ENCODE measurements at regions of chr1 and their contacts with region 1.

Region 1: DNA sequence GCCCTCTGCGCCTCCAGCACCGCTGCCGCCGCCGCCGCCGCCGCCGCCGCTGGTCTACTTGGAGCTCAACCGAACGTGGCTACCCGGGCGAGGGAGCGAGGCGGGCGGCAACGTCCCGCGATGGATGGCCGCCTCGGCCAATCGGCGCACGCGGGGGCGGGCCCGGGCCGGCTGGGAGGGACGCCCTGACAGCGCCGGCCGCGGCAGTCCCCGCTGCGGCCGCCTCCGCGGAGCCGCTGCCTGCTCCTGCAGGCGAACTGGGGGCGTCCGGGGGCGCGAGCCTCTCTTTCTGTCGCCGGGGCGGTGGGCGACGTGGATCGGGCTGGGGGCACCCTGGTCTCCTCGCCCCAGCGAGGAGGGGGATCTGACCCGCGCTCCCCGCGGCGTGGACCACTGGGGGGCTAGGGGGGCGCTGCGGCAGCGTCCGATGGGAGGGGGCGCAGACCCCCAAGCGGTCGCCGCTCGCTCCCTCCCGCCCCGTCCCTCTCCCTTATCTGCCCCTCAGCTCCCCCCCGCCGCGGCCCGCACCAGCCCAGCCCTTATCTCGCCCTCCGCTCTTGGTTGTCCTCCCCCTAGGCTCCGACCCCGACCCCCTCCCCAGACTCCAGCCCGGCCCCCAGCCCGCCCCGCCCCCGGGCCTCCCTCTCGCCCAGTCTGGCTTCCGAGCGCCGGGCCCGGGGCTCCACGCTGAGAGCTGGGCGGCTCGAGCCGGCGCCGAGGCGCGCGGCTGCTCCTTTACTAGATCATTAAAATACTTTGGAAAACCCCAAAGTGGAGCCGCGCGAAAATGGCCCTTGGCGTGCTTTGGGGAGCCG is at the start of gene SSBP3:
- DNase-seq: peak; percentile 89 to 96 (median 93)
- ATAC-seq: peak; percentile 95
- H3K4me3 ChIP-seq: peak within 1 kb of the TSS; percentile 76
- H3K4me3 Mint-ChIP-seq: peak within 1 kb of the TSS; percentile 92 to 99 (median 96)
- H3K27ac ChIP-seq: peak within 1 kb of the TSS; percentile 93
- H3K27ac Mint-ChIP-seq: peak within 1 kb of the TSS; percentile 84 to 97 (median 91)
- H3K4me1 ChIP-seq: peaks cover 40 to 44% of the 10 kb centered on the region in 2 donors
- H3K4me1 Mint-ChIP-seq: peaks cover 59 to 74% (median 69%) of the 10 kb centered on the region in 7 donors
- H3K27me3 ChIP-seq: no peaks in the 10 kb centered on the region
- H3K27me3 Mint-ChIP-seq: no peaks in the 10 kb centered on the region
- total RNA-seq, gene SSBP3: 69.4 to 124 (median 98.1) TPM

Region 2: GRCh38 chr1:53889304-53890298 is 516.9 kb before region 1 on chr1 and contains the start of gene YIPF1:
- CTCF ChIA-PET with region 1: no interaction called
- POLR2A ChIA-PET with region 1: no interaction called
- intact Hi-C with region 1: loop called in 1 of 2 experiments (anchors 2 kb)
- DNase-seq: peak; percentile 61 to 88 (median 85)
- ATAC-seq: peak; percentile 98
- H3K4me3 ChIP-seq: peak within 1 kb of the TSS; percentile 79
- H3K4me3 Mint-ChIP-seq: peak within 1 kb of the TSS; percentile 88 to 98 (median 96)
- H3K27ac ChIP-seq: peak within 1 kb of the TSS; percentile 75
- H3K27ac Mint-ChIP-seq: peak within 1 kb of the TSS; percentile 89 to 97 (median 95)
- H3K4me1 ChIP-seq: peaks cover 20 to 23% of the 10 kb centered on the region in 2 donors
- H3K4me1 Mint-ChIP-seq: peaks cover 26 to 55% (median 51%) of the 10 kb centered on the region in 7 donors
- H3K27me3 ChIP-seq: no peaks in the 10 kb centered on the region
- H3K27me3 Mint-ChIP-seq: peaks cover 0 to 2% (median 0%) of the 10 kb centered on the region in 5 donors
- total RNA-seq, gene YIPF1: 10.5 to 18.0 (median 16.3) TPM

Region 3: DNA sequence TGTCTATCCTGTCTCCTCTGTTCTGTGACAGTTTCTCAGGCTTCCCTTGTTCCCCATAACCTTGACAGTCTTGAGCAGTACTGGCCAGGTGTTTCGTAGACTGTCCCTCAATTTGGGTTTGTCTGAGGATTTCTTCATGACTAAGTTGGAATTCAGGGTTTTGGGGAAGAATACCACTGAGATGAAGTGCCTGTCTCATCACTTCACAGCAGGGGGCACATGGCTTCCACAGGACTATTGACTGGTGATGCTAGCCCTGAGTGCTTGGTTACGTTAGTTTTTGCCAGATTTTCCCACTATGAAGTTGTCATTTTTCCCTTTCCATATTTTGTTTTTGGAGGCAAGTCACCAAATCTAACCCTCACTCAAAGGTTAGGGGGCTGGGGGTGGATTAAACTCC is 299.4 kb before region 1 on chr1:
- CTCF ChIA-PET with region 1: no interaction called
- POLR2A ChIA-PET with region 1: no interaction called
- intact Hi-C with region 1: loop called in 1 of 2 experiments (anchors 2 kb)
- DNase-seq: no peak
- ATAC-seq: no peak
- H3K4me3 ChIP-seq: no peak overlapping the region
- H3K4me3 Mint-ChIP-seq: no peak overlapping the region
- H3K27ac ChIP-seq: no peak overlapping the region
- H3K27ac Mint-ChIP-seq: no peak overlapping the region
- H3K4me1 ChIP-seq: no peaks in the 10 kb centered on the region
- H3K4me1 Mint-ChIP-seq: no peaks in the 10 kb centered on the region
- H3K27me3 ChIP-seq: no peaks in the 10 kb centered on the region
- H3K27me3 Mint-ChIP-seq: no peaks in the 10 kb centered on the region

Region 4: DNA sequence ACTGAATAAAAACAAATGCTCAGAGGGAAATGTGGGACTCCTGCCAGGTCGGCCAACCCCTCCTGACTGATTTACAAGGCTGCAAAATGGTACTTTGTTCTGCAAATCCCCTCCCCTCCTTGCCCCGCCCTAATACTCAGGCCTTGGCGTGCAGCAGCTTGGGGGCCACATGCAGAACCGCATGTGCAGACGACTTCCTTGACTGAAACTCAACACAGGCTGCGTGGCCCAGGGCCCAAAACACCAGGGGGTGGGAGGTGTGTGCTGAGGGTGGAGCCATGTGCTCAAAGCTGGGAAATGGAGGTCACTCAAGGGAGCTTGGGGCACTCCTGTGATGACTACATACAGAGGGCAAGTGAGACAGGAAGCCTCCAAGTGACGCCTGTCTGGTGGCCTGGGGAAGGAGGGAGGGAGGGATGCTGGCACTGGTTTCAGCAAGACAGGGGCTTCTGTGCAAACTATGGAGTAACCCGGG is 119.3 kb before region 1 on chr1:
- CTCF ChIA-PET with region 1: no interaction called
- POLR2A ChIA-PET with region 1: interaction called, 5 read pairs
- intact Hi-C with region 1: loop called (anchors 1 kb)
- DNase-seq: peak; percentile 21 to 82 (median 73)
- ATAC-seq: peak; percentile 76
- H3K4me3 ChIP-seq: peak overlapping the region; percentile 21
- H3K4me3 Mint-ChIP-seq: peak overlapping the region; percentile 79 to 90 (median 87)
- H3K27ac ChIP-seq: peak overlapping the region; percentile 85
- H3K27ac Mint-ChIP-seq: peak overlapping the region; percentile 87 to 99 (median 96)
- H3K4me1 ChIP-seq: peaks cover 6 to 90% of the 10 kb centered on the region in 2 donors
- H3K4me1 Mint-ChIP-seq: peaks cover 59 to 100% (median 94%) of the 10 kb centered on the region in 7 donors
- H3K27me3 ChIP-seq: no peaks in the 10 kb centered on the region
- H3K27me3 Mint-ChIP-seq: no peaks in the 10 kb centered on the region

Region 5: DNA sequence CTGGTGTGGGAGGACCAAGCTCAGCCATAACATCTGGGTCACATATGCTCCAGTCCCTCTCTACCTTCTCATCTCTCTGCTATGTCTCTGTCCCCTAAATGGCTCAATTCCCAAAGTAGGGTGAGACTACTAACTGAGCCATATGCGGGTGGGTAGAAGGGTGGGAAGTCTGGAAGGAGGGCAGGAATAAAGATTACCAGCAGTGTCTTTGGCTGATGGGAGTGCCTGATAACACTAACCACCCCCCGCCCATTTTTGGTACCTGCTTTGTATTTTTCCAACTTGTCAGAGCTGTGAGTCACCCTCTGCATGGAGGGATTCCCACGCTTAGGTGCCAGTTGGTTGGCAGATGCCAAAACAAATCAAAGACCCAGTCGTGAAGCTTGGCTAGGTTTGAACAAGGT is 14.6 kb after region 1 on chr1:
- CTCF ChIA-PET with region 1: no interaction called
- POLR2A ChIA-PET with region 1: no interaction called
- intact Hi-C with region 1: no loop called
- DNase-seq: no peak
- ATAC-seq: no peak
- H3K4me3 ChIP-seq: no peak overlapping the region
- H3K4me3 Mint-ChIP-seq: no peak overlapping the region
- H3K27ac ChIP-seq: no peak overlapping the region
- H3K27ac Mint-ChIP-seq: no peak overlapping the region
- H3K4me1 ChIP-seq: no peaks in the 10 kb centered on the region
- H3K4me1 Mint-ChIP-seq: peaks cover 0 to 8% (median 6%) of the 10 kb centered on the region in 7 donors
- H3K27me3 ChIP-seq: no peaks in the 10 kb centered on the region
- H3K27me3 Mint-ChIP-seq: peaks cover 0 to 16% (median 0%) of the 10 kb centered on the region in 5 donors

Region 6: GRCh38 chr1:54488779-54489626 is 82.5 kb after region 1 on chr1:
- CTCF ChIA-PET with region 1: interaction called, 15 read pairs
- POLR2A ChIA-PET with region 1: interaction called, 70 read pairs
- intact Hi-C with region 1: loop called (anchors 1 kb)
- DNase-seq: peak; percentile 54 to 88 (median 73)
- ATAC-seq: peak; percentile 82
- H3K4me3 ChIP-seq: peak overlapping the region; percentile 83
- H3K4me3 Mint-ChIP-seq: peak overlapping the region; percentile 85 to 95 (median 90)
- H3K27ac ChIP-seq: peak overlapping the region; percentile 75
- H3K27ac Mint-ChIP-seq: peak overlapping the region; percentile 51 to 93 (median 78)
- H3K4me1 ChIP-seq: peaks cover 25 to 33% of the 10 kb centered on the region in 2 donors
- H3K4me1 Mint-ChIP-seq: peaks cover 26 to 55% (median 41%) of the 10 kb centered on the region in 7 donors
- H3K27me3 ChIP-seq: no peaks in the 10 kb centered on the region
- H3K27me3 Mint-ChIP-seq: peaks cover 0 to 38% (median 0%) of the 10 kb centered on the region in 5 donors

Region 7: GRCh38 chr1:54800899-54801759 is 394.6 kb after region 1 on chr1 and contains the start of gene TTC22:
- CTCF ChIA-PET with region 1: no interaction called
- POLR2A ChIA-PET with region 1: no interaction called
- intact Hi-C with region 1: loop called (anchors 2 kb)
- DNase-seq: peak; percentile 49 to 71 (median 64)
- ATAC-seq: peak; percentile 91
- H3K4me3 ChIP-seq: peak within 1 kb of the TSS; percentile 94
- H3K4me3 Mint-ChIP-seq: peak within 1 kb of the TSS; percentile 90 to 99 (median 96)
- H3K27ac ChIP-seq: peak within 1 kb of the TSS; percentile 74
- H3K27ac Mint-ChIP-seq: peak within 1 kb of the TSS; percentile 82 to 97 (median 90)
- H3K4me1 ChIP-seq: peaks cover 38 to 44% of the 10 kb centered on the region in 2 donors
- H3K4me1 Mint-ChIP-seq: peaks cover 32 to 77% (median 56%) of the 10 kb centered on the region in 7 donors
- H3K27me3 ChIP-seq: no peaks in the 10 kb centered on the region
- H3K27me3 Mint-ChIP-seq: no peaks in the 10 kb centered on the region
- total RNA-seq, gene TTC22: 7.0 to 16.6 (median 9.8) TPM